GM12878 (cell line): ENCODE measurements at regions of chr2 and their contacts with region 1.

Region 1: DNA sequence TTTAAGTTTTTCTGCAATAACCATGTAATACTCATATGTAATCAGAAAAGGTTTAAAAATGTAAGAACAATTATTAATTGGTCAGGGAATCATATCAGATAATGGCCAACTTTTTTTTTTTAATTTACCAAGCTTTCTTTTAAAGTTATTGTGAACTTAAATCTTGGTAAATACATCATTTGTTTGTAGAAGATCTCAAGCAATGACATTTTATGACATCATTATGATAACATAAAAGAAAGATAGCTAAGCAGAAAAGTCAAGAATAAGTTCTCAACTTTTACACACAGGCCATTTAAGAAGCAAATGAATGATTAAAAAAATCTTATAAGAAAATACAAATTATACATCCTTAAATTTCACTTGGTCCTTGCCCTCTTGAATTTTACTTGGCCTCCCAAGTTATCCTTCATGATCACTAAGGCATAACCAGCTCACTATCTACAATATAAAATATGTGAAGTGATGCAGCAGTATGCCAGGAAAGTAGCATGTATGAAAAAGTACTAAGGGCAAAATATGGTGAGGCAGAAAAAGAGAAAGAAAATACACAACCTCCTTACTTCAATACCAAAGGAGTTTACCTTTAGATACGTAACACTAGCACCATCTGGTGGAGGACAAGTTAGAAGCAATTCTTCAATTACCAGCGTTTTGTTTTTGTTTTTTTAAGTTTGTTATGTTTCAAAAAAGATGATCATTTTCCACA is 116.6 kb downstream of the SRBD1 start:
- DNase-seq: peak; percentile 21
- ATAC-seq: peak; percentile 63
- H3K4me3 ChIP-seq: no peak overlapping the region
- H3K27ac ChIP-seq: no peak overlapping the region
- H3K4me1 ChIP-seq: peaks cover 14% of the 10 kb centered on the region; the same call in 1 of the 2 replicates
- H3K27me3 ChIP-seq: no peaks in the 10 kb centered on the region
- CTCF ChIP-seq: peak; percentile 64 to 75 (median 74)
- EP300 ChIP-seq: no peak
- POLR2A ChIP-seq: no peak
- RAD21 ChIP-seq: peak; percentile 88

Region 2: GRCh38 chr2:44981136-44982108 is 513.0 kb before region 1 on chr2:
- CTCF ChIA-PET with region 1: interaction called, 227 read pairs
- POLR2A ChIA-PET with region 1: interaction called, 3 read pairs
- RAD21 ChIA-PET with region 1: interaction called, 120 read pairs
- SMC1A ChIA-PET with region 1: interaction called, 156 read pairs
- in situ Hi-C with region 1: loop called (anchors 5 kb)
- intact Hi-C with region 1: loop called (anchors 1 kb)
- DNase-seq: no peak
- ATAC-seq: peak; percentile 92
- H3K4me3 ChIP-seq: no peak overlapping the region
- H3K27ac ChIP-seq: no peak overlapping the region
- H3K4me1 ChIP-seq: peaks cover 4% of the 10 kb centered on the region
- H3K27me3 ChIP-seq: no peaks in the 10 kb centered on the region; a peak in 1 of 4 replicates
- CTCF ChIP-seq: peak; percentile 76 to 89 (median 77)
- EP300 ChIP-seq: no peak
- POLR2A ChIP-seq: no peak
- RAD21 ChIP-seq: peak; percentile 92

Region 3: DNA sequence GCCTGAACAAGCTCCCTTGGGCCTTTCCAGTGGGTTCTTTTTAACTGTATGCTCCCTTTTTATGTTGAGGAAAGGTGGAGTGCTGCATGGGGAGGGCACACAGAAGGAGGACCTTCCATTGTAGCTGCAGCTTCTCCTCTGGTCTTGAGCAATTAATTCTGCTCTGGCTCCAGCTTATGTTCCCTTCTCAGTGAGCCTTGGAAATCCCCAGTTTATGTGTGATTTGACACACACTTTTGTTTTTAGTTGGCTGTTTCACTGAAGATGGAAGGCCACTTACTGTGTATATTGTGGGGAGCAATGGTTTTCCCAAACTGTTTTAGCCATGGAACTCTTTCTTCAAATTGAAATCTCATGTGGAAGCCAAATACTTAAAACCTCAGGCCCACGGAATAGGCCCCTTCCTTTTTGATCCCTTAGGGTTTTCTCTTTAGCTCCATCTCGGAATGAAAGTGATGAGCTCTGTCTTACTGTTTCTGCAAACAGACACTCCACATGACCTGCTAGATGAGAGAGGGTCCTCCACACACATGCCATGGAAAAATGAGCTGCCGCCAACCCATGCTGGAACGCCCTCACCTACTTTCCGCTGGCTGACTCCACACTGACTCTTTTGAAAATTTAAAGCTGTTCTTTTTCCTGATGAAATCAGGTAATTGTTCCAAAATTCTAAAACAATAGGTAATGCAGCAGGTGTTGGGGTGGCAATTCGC is 204.3 kb before region 1 on chr2:
- CTCF ChIA-PET with region 1: interaction called, 3 read pairs
- POLR2A ChIA-PET with region 1: no interaction called
- RAD21 ChIA-PET with region 1: no interaction called
- SMC1A ChIA-PET with region 1: interaction called, 3 read pairs
- in situ Hi-C with region 1: no loop called
- intact Hi-C with region 1: loop called (anchors 10 kb)
- DNase-seq: peak; percentile 40
- ATAC-seq: peak; percentile 91
- H3K4me3 ChIP-seq: no peak overlapping the region
- H3K27ac ChIP-seq: peak overlapping the region; percentile 27
- H3K4me1 ChIP-seq: peaks cover 9% of the 10 kb centered on the region
- H3K27me3 ChIP-seq: no peaks in the 10 kb centered on the region; a peak in 1 of 4 replicates
- CTCF ChIP-seq: no peak
- EP300 ChIP-seq: peak in 1 of 2 experiments; percentile 43; a peak in 1 of 4 replicates
- POLR2A ChIP-seq: no peak
- RAD21 ChIP-seq: no peak

Region 4: GRCh38 chr2:45477546-45477945 is 16.9 kb before region 1 on chr2:
- CTCF ChIA-PET with region 1: interaction called, 15 read pairs
- POLR2A ChIA-PET with region 1: no interaction called
- RAD21 ChIA-PET with region 1: interaction called, 4 read pairs
- SMC1A ChIA-PET with region 1: interaction called, 4 read pairs
- in situ Hi-C with region 1: no loop called
- intact Hi-C with region 1: no loop called
- DNase-seq: no peak
- ATAC-seq: no peak
- H3K4me3 ChIP-seq: no peak overlapping the region
- H3K27ac ChIP-seq: no peak overlapping the region
- H3K4me1 ChIP-seq: no peaks in the 10 kb centered on the region
- H3K27me3 ChIP-seq: no peaks in the 10 kb centered on the region
- CTCF ChIP-seq: no peak
- EP300 ChIP-seq: no peak
- POLR2A ChIP-seq: no peak
- RAD21 ChIP-seq: no peak

Region 5: GRCh38 chr2:45505138-45505537 is 10.7 kb after region 1 on chr2:
- CTCF ChIA-PET with region 1: interaction called, 19 read pairs
- POLR2A ChIA-PET with region 1: no interaction called
- RAD21 ChIA-PET with region 1: interaction called, 4 read pairs
- SMC1A ChIA-PET with region 1: interaction called, 9 read pairs
- in situ Hi-C with region 1: no loop called
- intact Hi-C with region 1: no loop called
- DNase-seq: no peak
- ATAC-seq: no peak
- H3K4me3 ChIP-seq: no peak overlapping the region
- H3K27ac ChIP-seq: no peak overlapping the region
- H3K4me1 ChIP-seq: no peaks in the 10 kb centered on the region
- H3K27me3 ChIP-seq: no peaks in the 10 kb centered on the region
- CTCF ChIP-seq: no peak
- EP300 ChIP-seq: no peak
- POLR2A ChIP-seq: no peak
- RAD21 ChIP-seq: no peak